GM12878 (cell line): ENCODE measurements at regions of chr5 and their contacts with region 1.

Region 1: GRCh38 chr5:136073714-136074529 is 45.1 kb downstream of the TGFBI start:
- DNase-seq: no peak
- ATAC-seq: peak; percentile 86
- H3K4me3 ChIP-seq: no peak overlapping the region
- H3K27ac ChIP-seq: no peak overlapping the region
- H3K4me1 ChIP-seq: no peaks in the 10 kb centered on the region; the same call in 1 of the 2 replicates
- H3K27me3 ChIP-seq: no peaks in the 10 kb centered on the region; a peak in 1 of 4 replicates
- CTCF ChIP-seq: no peak
- EP300 ChIP-seq: 0 out of 4 replicates have a peak, but pooled peaks of 1 of the 2 experiments have one; percentile 44
- POLR2A ChIP-seq: no peak
- RAD21 ChIP-seq: no peak

Region 2: GRCh38 chr5:136020383-136021015 is 53.4 kb before region 1 on chr5:
- CTCF ChIA-PET with region 1: no interaction called
- POLR2A ChIA-PET with region 1: no interaction called
- RAD21 ChIA-PET with region 1: no interaction called
- SMC1A ChIA-PET with region 1: no interaction called
- in situ Hi-C with region 1: no loop called
- intact Hi-C with region 1: no loop called
- DNase-seq: no peak
- ATAC-seq: peak; percentile 35; the same call in 2 of the 3 replicates
- H3K4me3 ChIP-seq: no peak overlapping the region
- H3K27ac ChIP-seq: no peak overlapping the region
- H3K4me1 ChIP-seq: no peaks in the 10 kb centered on the region
- H3K27me3 ChIP-seq: peaks cover 0 to 5% of the 10 kb centered on the region in 2 experiments; a peak in 2 of 4 replicates
- CTCF ChIP-seq: no peak
- EP300 ChIP-seq: no peak
- POLR2A ChIP-seq: no peak
- RAD21 ChIP-seq: no peak

Region 3: GRCh38 chr5:136047858-136048257 is 26.1 kb before region 1 on chr5:
- CTCF ChIA-PET with region 1: no interaction called
- POLR2A ChIA-PET with region 1: no interaction called
- RAD21 ChIA-PET with region 1: no interaction called
- SMC1A ChIA-PET with region 1: no interaction called
- in situ Hi-C with region 1: no loop called
- intact Hi-C with region 1: no loop called
- DNase-seq: no peak
- ATAC-seq: no peak
- H3K4me3 ChIP-seq: no peak overlapping the region
- H3K27ac ChIP-seq: no peak overlapping the region
- H3K4me1 ChIP-seq: no peaks in the 10 kb centered on the region
- H3K27me3 ChIP-seq: no peaks in the 10 kb centered on the region; a peak in 1 of 4 replicates
- CTCF ChIP-seq: no peak
- EP300 ChIP-seq: no peak
- POLR2A ChIP-seq: no peak
- RAD21 ChIP-seq: no peak

Region 4: GRCh38 chr5:136087961-136088871 is 14.3 kb after region 1 on chr5:
- CTCF ChIA-PET with region 1: interaction called, 11 read pairs
- POLR2A ChIA-PET with region 1: no interaction called
- RAD21 ChIA-PET with region 1: interaction called, 4 read pairs
- SMC1A ChIA-PET with region 1: interaction called, 12 read pairs
- in situ Hi-C with region 1: no loop called
- intact Hi-C with region 1: no loop called
- DNase-seq: no peak
- ATAC-seq: peak; percentile 49
- H3K4me3 ChIP-seq: no peak overlapping the region
- H3K27ac ChIP-seq: no peak overlapping the region
- H3K4me1 ChIP-seq: no peaks in the 10 kb centered on the region
- H3K27me3 ChIP-seq: no peaks in the 10 kb centered on the region; a peak in 1 of 4 replicates
- CTCF ChIP-seq: no peak
- EP300 ChIP-seq: no peak
- POLR2A ChIP-seq: no peak
- RAD21 ChIP-seq: no peak

Region 5: GRCh38 chr5:136094189-136094912 is 20.4 kb after region 1 on chr5:
- CTCF ChIA-PET with region 1: interaction called, 4 read pairs
- POLR2A ChIA-PET with region 1: interaction called, 6 read pairs
- RAD21 ChIA-PET with region 1: interaction called, 3 read pairs
- SMC1A ChIA-PET with region 1: interaction called, 12 read pairs
- in situ Hi-C with region 1: no loop called
- intact Hi-C with region 1: no loop called
- DNase-seq: no peak
- ATAC-seq: peak; percentile 71
- H3K4me3 ChIP-seq: no peak overlapping the region
- H3K27ac ChIP-seq: no peak overlapping the region
- H3K4me1 ChIP-seq: no peaks in the 10 kb centered on the region
- H3K27me3 ChIP-seq: peaks cover 0 to 7% of the 10 kb centered on the region in 2 experiments; a peak in 2 of 4 replicates
- CTCF ChIP-seq: no peak
- EP300 ChIP-seq: no peak
- POLR2A ChIP-seq: no peak
- RAD21 ChIP-seq: no peak

Region 6: GRCh38 chr5:136166909-136167308 is 93.0 kb after region 1 on chr5:
- CTCF ChIA-PET with region 1: interaction called, 64 read pairs
- POLR2A ChIA-PET with region 1: no interaction called
- RAD21 ChIA-PET with region 1: interaction called, 3 read pairs
- SMC1A ChIA-PET with region 1: interaction called, 12 read pairs
- in situ Hi-C with region 1: no loop called
- intact Hi-C with region 1: no loop called
- DNase-seq: peak; percentile 21
- ATAC-seq: peak; percentile 84
- H3K4me3 ChIP-seq: no peak overlapping the region
- H3K27ac ChIP-seq: no peak overlapping the region
- H3K4me1 ChIP-seq: peaks cover 8% of the 10 kb centered on the region; the same call in 1 of the 2 replicates
- H3K27me3 ChIP-seq: no peaks in the 10 kb centered on the region
- CTCF ChIP-seq: no peak
- EP300 ChIP-seq: 0 out of 4 replicates have a peak, but pooled peaks of 1 of the 2 experiments have one; percentile 26
- POLR2A ChIP-seq: no peak
- RAD21 ChIP-seq: no peak